ENCODE measurements at regions of chr15 and their contacts with region 1.

Region 1: DNA sequence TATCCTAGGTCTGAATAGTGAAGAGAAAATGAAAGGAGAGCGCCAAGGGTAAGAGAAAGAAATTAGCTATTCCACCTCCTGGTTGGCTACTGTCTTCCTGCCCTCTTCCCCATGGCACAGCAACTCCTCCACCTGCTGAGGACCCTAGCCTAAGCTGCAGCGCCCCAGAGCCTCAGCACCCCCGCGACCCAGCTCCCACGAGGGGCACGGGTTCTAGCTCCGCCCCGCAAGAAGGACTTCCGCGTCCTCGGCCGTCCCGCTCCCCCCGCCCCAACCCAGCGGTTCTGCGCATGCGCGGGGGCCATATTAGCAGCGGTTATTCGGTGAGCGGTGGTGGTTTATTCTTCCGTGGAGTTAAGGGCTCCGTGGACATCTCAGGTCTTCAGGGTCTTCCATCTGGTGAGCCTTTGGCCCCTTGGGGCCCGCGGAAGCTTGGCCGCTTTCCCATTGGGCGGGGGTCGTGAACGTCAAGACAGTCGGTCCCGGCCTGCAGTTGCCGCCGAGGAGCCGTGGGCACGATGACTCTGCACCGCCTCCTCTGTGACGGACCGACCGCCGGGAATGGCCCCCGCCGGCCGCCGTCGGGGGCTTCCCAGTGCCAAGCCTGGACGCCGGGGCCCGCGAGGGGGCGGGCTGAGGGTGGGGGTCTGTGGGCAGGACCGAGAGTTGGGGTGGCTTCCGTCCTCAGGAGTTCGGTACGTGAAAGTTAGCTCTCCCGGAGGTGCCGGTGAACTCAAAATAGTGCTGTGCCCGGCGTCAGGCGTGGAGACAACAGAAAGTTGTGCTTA is at the start of gene PSMA4:
- DNase-seq: peak; percentile 94
- H3K4me3 Mint-ChIP-seq: peak within 1 kb of the TSS; percentile 84
- H3K27ac Mint-ChIP-seq: peak within 1 kb of the TSS; percentile 90
- H3K4me1 Mint-ChIP-seq: peaks cover 23% of the 10 kb centered on the region
- H3K27me3 Mint-ChIP-seq: no peaks in the 10 kb centered on the region
- total RNA-seq, gene PSMA4: 306 to 310 TPM

Region 2: GRCh38 chr15:77455696-77456321 is 1084.5 kb before region 1 on chr15:
- CTCF ChIA-PET with region 1: no interaction called
- intact Hi-C with region 1: no loop called
- DNase-seq: no peak
- H3K4me3 Mint-ChIP-seq: no peak overlapping the region
- H3K27ac Mint-ChIP-seq: no peak overlapping the region
- H3K4me1 Mint-ChIP-seq: peaks cover 30% of the 10 kb centered on the region
- H3K27me3 Mint-ChIP-seq: no peaks in the 10 kb centered on the region

Region 3: GRCh38 chr15:78506971-78507830 is 33.1 kb before region 1 on chr15 and contains the start of gene HYKK:
- CTCF ChIA-PET with region 1: no interaction called
- intact Hi-C with region 1: loop called (anchors 1 kb)
- DNase-seq: peak; percentile 87
- H3K4me3 Mint-ChIP-seq: peak within 1 kb of the TSS; percentile 75
- H3K27ac Mint-ChIP-seq: no peak within 1 kb of the TSS
- H3K4me1 Mint-ChIP-seq: peaks cover 20% of the 10 kb centered on the region
- H3K27me3 Mint-ChIP-seq: no peaks in the 10 kb centered on the region
- total RNA-seq, gene HYKK: 3.4 to 3.6 TPM

Region 4: GRCh38 chr15:78565097-78565951 is 25.0 kb after region 1 on chr15 and contains the start of gene CHRNA5:
- CTCF ChIA-PET with region 1: no interaction called
- intact Hi-C with region 1: loop called (anchors 2 kb)
- DNase-seq: peak; percentile 46
- H3K4me3 Mint-ChIP-seq: peak within 1 kb of the TSS; percentile 80
- H3K27ac Mint-ChIP-seq: no peak within 1 kb of the TSS
- H3K4me1 Mint-ChIP-seq: peaks cover 24% of the 10 kb centered on the region
- H3K27me3 Mint-ChIP-seq: peaks cover 36% of the 10 kb centered on the region
- total RNA-seq, gene CHRNA5: 1.1 to 1.5 TPM